ENCODE measurements at regions of chr4 and their contacts with region 1.

Region 1: GRCh38 chr4:77193511-77194102 is 36.6 kb downstream of the CCNG2 start:
- H3K4me3 Mint-ChIP-seq: peak overlapping the region; percentile 83
- H3K27ac Mint-ChIP-seq: peak overlapping the region; percentile 95
- H3K4me1 Mint-ChIP-seq: peaks cover 49% of the 10 kb centered on the region
- H3K27me3 Mint-ChIP-seq: no peaks in the 10 kb centered on the region

Region 2: GRCh38 chr4:76718831-76719230 is 474.8 kb before region 1 on chr4:
- intact Hi-C with region 1: loop called (anchors 10 kb)
- H3K4me3 Mint-ChIP-seq: no peak overlapping the region
- H3K27ac Mint-ChIP-seq: no peak overlapping the region
- H3K4me1 Mint-ChIP-seq: peaks cover 40% of the 10 kb centered on the region
- H3K27me3 Mint-ChIP-seq: peaks cover 69% of the 10 kb centered on the region

Region 3: GRCh38 chr4:76949276-76950051 is 244.1 kb before region 1 on chr4 and contains the start of gene SEPTIN11:
- intact Hi-C with region 1: loop called (anchors 2 kb)
- H3K4me3 Mint-ChIP-seq: peak within 1 kb of the TSS; percentile 92
- H3K27ac Mint-ChIP-seq: peak within 1 kb of the TSS; percentile 85
- H3K4me1 Mint-ChIP-seq: peaks cover 41% of the 10 kb centered on the region
- H3K27me3 Mint-ChIP-seq: peaks cover 16% of the 10 kb centered on the region

Region 4: DNA sequence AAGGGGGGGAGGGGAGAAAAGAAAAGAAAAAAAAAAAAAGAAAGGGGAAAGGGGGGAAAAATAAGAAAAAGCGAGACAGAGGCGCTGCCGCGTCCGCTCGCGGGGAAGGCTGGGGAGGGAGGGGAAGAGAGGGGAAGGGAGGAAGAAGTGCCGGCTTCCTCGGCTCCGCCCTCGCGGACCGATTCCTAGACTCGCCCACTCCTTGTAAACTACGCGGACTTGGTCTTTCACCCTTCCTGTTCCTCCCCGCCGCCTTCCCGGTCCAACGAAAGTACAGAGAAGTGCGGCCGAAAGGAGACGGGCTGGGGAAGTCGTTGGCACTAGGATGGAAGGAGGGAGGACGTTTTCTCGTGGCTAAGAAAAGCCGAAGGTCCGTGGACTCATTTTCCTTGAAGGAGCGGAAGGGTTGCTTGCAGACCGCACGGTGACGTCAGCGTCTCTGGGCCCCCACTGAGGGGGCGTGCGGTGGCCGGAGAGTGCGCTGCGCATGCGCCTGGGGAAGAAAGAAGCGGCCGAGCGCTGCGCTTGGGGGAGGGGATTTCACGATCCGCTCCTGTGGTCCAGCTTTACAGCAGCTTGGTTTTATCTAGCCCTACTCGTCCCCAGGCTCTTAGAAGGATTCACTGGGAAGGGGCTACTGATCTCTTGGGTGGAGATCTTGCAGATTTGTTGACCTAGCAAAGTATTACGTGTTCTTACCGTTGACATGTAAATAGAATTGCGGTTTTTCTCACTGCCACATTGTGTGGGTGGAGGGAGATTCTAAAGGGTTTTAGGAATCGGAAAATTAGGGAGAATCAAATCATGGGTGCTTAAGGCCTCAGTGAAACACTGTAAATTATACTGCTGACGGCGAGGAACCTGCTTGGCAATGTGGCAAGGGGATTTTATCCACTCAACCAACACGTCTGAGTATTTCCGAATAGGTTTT is 117.5 kb before region 1 on chr4 and contains the start of gene CCNI:
- intact Hi-C with region 1: loop called (anchors 2 kb)
- H3K4me3 Mint-ChIP-seq: peak within 1 kb of the TSS; percentile 94
- H3K27ac Mint-ChIP-seq: no peak within 1 kb of the TSS
- H3K4me1 Mint-ChIP-seq: peaks cover 33% of the 10 kb centered on the region
- H3K27me3 Mint-ChIP-seq: no peaks in the 10 kb centered on the region

Region 5: DNA sequence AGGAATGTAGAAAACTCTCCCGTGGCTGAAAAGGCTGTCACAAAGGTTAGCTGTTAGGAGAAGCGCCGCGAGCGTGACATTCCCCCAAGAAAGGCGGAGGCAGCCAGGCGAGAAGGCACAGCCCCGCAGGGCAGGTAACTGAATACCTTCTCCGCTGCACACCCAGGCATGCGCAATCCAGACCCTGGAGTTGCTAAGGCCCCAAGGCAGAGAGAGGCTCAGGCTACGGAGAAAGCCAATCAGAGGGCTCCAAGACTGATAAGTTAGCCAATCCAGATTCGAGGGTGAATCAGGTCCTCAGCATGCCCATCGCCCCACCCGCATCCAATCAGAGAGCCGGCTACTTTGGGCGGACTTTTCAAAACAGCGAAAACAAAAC is 37.1 kb before region 1 on chr4:
- intact Hi-C with region 1: loop called (anchors 2 kb)
- H3K4me3 Mint-ChIP-seq: peak overlapping the region; percentile 97
- H3K27ac Mint-ChIP-seq: peak overlapping the region; percentile 99
- H3K4me1 Mint-ChIP-seq: peaks cover 37% of the 10 kb centered on the region
- H3K27me3 Mint-ChIP-seq: no peaks in the 10 kb centered on the region